Cardiac septum (tissue), 1 donor: ENCODE measurements at regions of chr6 and their contacts with region 1.

Region 1: DNA sequence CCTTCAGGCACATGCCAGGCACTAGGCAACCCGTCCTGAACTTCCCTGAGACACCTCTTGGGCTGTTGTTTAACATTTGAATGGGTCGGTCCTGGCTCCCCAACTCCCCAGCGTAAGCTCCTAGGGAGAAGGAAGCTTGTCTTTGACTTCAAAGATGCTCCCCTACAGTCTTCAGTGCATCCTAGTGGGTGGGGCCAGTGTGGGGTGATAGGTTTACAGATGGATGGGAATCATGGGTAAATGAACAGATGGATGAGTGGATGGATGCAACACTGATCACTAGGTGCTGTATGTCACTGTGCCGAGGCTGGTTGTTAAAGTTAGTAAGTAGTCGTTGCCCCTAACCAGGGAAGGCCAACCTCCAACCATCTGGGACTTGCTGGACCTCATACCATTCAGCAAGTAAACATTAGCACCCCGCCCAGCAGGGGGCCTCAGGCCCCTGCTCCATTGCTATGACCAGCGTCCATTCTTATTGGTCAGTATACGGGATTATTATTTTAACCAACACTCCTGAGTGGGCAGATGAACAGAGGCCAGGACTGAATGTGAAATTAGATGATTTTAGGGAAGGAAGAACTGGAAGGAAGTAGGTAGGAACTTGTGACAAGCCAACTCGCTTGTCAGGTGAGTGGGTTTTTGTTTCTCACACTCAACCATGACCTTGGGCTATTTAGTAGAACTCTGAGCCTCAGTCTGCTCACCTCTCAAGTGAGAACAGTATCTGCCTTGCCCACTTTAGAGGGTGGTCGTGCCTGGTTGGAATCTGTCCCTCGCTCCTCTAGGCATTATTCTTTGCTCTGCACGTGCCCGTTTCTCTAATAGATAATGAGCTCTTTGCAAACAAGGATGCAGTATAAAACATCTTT is 82.9 kb upstream of the FOXP4 start:
- DNase-seq: no peak

Region 2: GRCh38 chr6:41591859-41592502 is 128.7 kb after region 1 on chr6:
- intact Hi-C with region 1: loop called (anchors 1 kb)
- DNase-seq: no peak